BJ (cell line): ENCODE measurements at regions of chr11 and their contacts with region 1.

Region 1: GRCh38 chr11:70415184-70415583 is 16.9 kb downstream of the CTTN start:
- DNase-seq: peak; percentile 88
- H3K4me3 ChIP-seq: no peak overlapping the region
- H3K27me3 ChIP-seq: no peaks in the 10 kb centered on the region
- CTCF ChIP-seq: peak; percentile 87

Region 2: GRCh38 chr11:70265341-70265740 is 149.8 kb before region 1 on chr11:
- CTCF ChIA-PET with region 1: no interaction called
- POLR2A ChIA-PET with region 1: no interaction called
- DNase-seq: no peak
- H3K4me3 ChIP-seq: no peak overlapping the region
- H3K27me3 ChIP-seq: peaks cover 4% of the 10 kb centered on the region
- CTCF ChIP-seq: no peak

Region 3: GRCh38 chr11:70399681-70400112 is 15.5 kb before region 1 on chr11:
- CTCF ChIA-PET with region 1: interaction called, 15 read pairs
- POLR2A ChIA-PET with region 1: interaction called, 4 read pairs
- DNase-seq: peak; percentile 83
- H3K4me3 ChIP-seq: peak overlapping the region; percentile 97
- H3K27me3 ChIP-seq: no peaks in the 10 kb centered on the region
- CTCF ChIP-seq: no peak

Region 4: DNA sequence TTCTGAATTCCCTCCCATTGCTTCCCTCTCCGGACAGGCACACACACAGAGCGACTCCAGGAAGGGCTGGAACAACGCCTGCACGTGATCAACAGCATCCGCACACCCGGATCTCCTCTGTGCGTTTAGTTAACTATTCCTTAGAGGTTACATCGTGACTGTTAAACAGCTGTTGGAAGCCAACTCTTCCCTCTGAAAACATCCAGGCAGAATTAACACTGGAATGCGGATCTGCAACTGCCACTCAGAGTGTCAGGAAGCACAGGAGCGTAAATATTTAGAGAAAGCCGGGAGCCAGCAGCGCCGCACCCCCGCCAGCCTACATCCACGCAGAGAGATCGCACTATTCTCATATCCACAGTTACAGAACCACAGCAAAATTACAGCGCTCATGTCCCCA is 791.0 kb after region 1 on chr11:
- CTCF ChIA-PET with region 1: no interaction called
- POLR2A ChIA-PET with region 1: no interaction called
- DNase-seq: no peak
- H3K4me3 ChIP-seq: no peak overlapping the region
- H3K27me3 ChIP-seq: peaks cover 4% of the 10 kb centered on the region
- CTCF ChIP-seq: no peak